Activated CD4-positive, alpha-beta memory T cell treated with anti-CD3 and anti-CD28 coated beads, Interleukin-2, amount 10 ng/mL, durations not matched to agents 7 days and 5 days (primary cell): ENCODE measurements at regions of chr1 and their contacts with region 1.

Region 1: DNA sequence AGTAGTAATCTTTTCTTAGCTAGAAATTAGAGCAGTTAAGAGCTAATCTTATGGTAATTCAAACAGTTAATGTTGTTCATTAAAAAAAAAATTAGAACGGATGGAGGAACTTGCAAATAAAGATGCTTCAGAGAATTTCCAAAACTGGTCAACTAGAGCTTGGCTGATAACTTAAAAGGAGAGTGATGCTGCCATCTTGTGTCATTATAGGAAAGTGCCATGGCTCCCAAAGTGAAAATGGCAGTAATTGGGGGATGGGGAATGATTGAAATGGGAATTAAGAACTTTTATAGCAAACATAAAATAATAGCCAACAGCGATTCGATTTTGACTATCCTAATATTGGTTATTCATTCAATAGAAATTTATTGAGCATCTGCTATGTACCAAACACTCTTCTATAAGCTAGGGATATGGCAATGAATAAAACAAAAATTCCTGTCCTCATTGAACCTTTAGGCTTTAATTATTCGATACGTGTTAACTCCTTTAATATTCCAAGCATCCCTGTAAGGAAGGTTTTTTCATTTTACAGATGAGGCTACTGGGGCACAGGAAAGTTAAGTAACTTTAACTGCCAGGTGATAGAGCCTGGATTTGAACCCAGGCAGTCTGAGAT is 5.7 kb upstream of the PLPP3 start:
- DNase-seq: no peak
- H3K4me3 Mint-ChIP-seq: no peak overlapping the region
- H3K27ac Mint-ChIP-seq: no peak overlapping the region
- H3K4me1 Mint-ChIP-seq: no peaks in the 10 kb centered on the region
- H3K27me3 Mint-ChIP-seq: peaks cover 11% of the 10 kb centered on the region

Region 2: GRCh38 chr1:55375617-55376258 is 1209.3 kb before region 1 on chr1:
- CTCF ChIA-PET with region 1: interaction called, 18 read pairs
- POLR2A ChIA-PET with region 1: no interaction called
- DNase-seq: peak; percentile 31
- H3K4me3 Mint-ChIP-seq: no peak overlapping the region
- H3K27ac Mint-ChIP-seq: no peak overlapping the region
- H3K4me1 Mint-ChIP-seq: peaks cover 5% of the 10 kb centered on the region
- H3K27me3 Mint-ChIP-seq: no peaks in the 10 kb centered on the region

Region 3: DNA sequence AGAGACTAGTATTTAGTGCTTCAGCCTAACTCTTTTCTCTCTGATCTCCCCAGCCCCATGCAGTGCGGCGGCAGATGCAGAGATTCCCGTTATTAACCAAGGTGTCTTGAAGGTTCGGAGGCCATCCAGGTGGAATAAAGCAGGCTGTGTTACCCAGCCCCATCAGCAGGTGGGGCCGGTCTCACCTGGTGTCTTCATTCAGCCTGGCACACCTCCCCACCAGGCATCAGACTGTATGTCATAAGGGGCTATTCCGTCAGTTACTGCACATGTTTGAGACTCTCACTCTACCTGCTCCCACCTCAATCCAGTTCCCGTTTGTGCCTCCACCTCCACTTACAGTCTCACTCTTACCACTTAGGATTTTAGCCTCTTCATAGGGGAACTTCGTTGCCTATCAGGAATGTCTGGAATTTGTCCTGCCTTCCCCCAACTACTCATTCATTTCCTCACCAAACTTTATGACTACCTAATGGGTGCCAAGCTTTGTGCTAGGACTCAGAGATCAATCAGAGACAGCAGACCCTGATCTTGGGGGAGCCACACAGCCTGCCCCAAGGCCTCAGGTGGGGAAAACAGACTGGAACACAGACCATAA is 175.8 kb before region 1 on chr1:
- CTCF ChIA-PET with region 1: interaction called, 10 read pairs
- POLR2A ChIA-PET with region 1: no interaction called
- DNase-seq: no peak
- H3K4me3 Mint-ChIP-seq: no peak overlapping the region
- H3K27ac Mint-ChIP-seq: no peak overlapping the region
- H3K4me1 Mint-ChIP-seq: no peaks in the 10 kb centered on the region
- H3K27me3 Mint-ChIP-seq: no peaks in the 10 kb centered on the region

Region 4: DNA sequence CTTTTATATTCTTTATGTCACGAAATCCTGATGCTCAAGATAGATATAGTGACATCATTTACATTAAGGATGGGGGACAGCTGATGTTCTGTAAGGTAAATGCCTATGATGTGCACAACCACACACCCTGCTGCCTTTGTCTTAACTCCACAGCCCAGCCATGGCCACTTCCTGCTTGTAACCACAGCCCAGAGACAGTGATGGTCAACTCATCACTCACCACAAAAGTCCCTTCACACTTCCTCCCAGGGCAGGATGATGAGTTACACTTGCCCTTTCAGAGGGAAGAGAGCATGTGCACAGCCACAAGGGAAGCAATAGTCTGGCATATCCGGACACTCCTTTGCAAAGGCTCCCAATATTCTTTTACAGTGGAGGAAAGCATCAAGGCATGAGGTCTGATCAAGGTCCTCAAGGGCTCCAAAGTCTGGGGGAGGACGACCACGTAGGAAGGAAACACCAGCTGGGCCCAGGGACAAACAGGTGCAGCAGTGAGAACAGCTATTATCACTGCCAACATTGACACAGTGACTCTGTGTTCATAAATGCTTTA is 59.5 kb before region 1 on chr1:
- CTCF ChIA-PET with region 1: no interaction called
- POLR2A ChIA-PET with region 1: no interaction called
- DNase-seq: no peak
- H3K4me3 Mint-ChIP-seq: no peak overlapping the region
- H3K27ac Mint-ChIP-seq: no peak overlapping the region
- H3K4me1 Mint-ChIP-seq: no peaks in the 10 kb centered on the region
- H3K27me3 Mint-ChIP-seq: no peaks in the 10 kb centered on the region